Dorsolateral prefrontal cortex (tissue), 120 donors: ENCODE measurements at regions of chr16 and their contacts with region 1.

Region 1: DNA sequence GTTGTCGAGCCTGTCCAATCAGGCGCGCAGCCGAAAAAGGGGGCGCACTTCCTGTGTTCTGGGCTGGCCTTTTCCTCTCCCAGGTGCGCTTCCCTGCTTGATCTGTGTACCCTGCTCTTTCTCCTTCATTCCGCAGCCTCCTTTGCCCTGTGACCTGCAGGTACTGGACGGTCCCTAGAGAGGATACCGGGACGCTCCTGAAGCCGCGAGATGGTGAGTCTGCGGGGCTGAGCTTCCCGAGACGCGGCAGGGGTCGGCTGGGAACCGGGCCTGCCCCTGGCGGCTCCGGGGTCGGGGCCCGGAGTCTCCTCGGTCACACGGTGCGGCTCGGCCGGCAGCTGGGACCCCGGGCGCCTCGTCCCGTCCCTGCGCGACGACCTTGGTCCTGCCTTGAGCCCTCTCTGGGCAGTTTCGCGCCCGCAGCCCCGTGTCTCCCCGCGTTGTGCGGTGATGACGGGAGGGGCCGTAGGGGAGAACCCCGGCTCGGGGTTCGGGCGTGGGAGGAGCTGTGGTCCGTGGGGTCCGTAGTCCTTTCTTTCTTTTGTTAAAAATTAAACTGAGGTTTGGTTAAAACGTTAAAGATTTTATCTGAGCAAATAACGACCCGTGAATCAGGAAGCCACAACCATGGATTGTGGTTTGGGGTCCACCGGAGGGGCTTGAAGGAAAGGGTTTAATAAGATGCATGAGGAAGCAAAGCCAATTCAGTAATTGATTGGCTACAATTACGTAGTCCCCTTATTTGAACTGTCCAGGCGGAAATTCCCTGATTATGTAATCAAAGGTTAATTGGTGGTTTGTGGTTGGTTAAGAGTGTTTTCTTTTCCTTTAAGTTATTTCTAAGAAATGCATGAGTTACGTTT is 172.8 kb upstream of the ZNF267 start:
- DNase-seq: peak; percentile 67 to 95 (median 89)
- H3K4me3 ChIP-seq: peak overlapping the region; percentile 57 to 97 (median 88)
- H3K27ac ChIP-seq: peak overlapping the region in 34 of 59 donors; percentile 6 to 80 (median 50)
- H3K27me3 ChIP-seq: no peaks in the 10 kb centered on the region
- CTCF ChIP-seq: peak in 43 of 56 donors; percentile 9 to 59 (median 32)

Region 2: GRCh38 chr16:31513126-31513525 is 187.6 kb before region 1 on chr16:
- intact Hi-C with region 1: loop called (anchors 5 to 10 kb)
- DNase-seq: no peak
- H3K4me3 ChIP-seq: no peak overlapping the region
- H3K27ac ChIP-seq: no peak overlapping the region
- H3K27me3 ChIP-seq: no peaks in the 10 kb centered on the region
- CTCF ChIP-seq: no peak

Region 3: GRCh38 chr16:31780342-31780741 is 79.6 kb after region 1 on chr16:
- intact Hi-C with region 1: no loop called
- DNase-seq: no peak
- H3K4me3 ChIP-seq: no peak overlapping the region
- H3K27ac ChIP-seq: no peak overlapping the region
- H3K27me3 ChIP-seq: no peaks in the 10 kb centered on the region
- CTCF ChIP-seq: no peak